HEK293 (cell line): ENCODE measurements at regions of chr11 and their contacts with region 1.

Region 1: DNA sequence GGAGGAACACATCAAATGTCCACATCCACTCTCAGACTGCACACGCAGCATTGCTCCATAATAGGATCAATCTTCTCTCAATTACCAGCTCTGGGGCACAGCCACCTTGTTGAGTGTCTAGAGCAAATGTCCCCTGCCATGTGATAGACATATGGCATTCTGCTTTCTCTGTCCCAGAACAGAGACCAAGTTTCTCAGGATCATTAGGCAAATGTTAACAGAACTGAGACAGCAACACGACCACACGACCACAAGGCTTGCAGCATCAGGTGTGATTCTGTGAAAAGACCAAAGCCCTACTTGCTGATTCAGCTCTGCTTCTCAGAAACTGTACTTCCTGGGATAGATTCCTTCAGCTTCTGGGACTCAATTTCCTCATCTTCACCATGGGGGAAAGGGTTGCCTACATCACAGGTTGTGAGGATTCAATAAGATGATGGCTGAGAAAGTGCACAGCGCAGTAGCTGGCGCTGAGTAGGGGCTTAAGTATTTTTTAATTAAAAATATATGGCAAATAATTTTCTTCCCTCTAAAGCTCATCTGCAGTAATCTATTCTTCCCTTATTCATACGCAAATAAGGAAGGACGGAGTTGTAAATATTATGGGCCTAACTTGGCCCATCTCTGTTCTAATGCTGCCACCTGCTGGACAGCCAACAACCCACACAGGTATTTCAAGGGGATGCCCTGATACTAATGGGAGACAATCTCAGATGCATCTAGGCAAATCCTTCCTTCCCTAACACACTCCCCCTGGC is 54.3 kb upstream of the USP47 start:
- H3K4me3 ChIP-seq: no peak overlapping the region
- H3K27ac ChIP-seq: no peak overlapping the region
- H3K4me1 ChIP-seq: no peaks in the 10 kb centered on the region
- CTCF ChIP-seq: peak; percentile 55

Region 2: DNA sequence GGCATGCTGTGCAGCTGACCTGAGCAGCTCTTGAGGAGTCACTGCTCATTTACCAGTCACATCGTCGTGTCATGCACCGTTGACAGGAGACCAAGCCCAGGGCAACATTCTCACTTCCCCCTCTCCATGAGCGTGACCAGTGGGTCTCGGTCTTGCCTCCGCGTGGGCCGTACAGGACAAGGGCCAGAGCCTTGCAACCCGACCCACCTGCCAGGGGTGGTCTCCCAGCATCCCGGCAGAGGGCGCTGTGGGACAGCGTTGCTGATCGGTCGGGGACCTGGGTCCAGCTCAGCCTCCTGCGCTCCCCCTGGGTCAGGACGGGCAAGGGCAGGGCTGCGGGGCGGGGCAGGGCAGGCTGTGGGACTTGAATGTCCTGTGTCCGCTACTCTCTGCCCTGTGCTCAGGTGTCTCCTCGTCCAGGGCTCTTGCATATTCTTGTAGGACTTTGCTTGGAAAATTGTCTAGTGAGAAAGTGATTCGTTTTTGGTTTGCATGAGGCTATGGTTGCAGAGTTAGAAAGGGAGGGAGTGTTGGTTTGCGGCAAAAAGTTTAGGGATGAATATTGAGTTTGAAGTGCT is 995.0 kb before region 1 on chr11:
- CTCF ChIA-PET with region 1: interaction called, 12 read pairs
- POLR2A ChIA-PET with region 1: no interaction called
- H3K4me3 ChIP-seq: no peak overlapping the region
- H3K27ac ChIP-seq: no peak overlapping the region
- H3K4me1 ChIP-seq: no peaks in the 10 kb centered on the region
- CTCF ChIP-seq: peak; percentile 90

Region 3: DNA sequence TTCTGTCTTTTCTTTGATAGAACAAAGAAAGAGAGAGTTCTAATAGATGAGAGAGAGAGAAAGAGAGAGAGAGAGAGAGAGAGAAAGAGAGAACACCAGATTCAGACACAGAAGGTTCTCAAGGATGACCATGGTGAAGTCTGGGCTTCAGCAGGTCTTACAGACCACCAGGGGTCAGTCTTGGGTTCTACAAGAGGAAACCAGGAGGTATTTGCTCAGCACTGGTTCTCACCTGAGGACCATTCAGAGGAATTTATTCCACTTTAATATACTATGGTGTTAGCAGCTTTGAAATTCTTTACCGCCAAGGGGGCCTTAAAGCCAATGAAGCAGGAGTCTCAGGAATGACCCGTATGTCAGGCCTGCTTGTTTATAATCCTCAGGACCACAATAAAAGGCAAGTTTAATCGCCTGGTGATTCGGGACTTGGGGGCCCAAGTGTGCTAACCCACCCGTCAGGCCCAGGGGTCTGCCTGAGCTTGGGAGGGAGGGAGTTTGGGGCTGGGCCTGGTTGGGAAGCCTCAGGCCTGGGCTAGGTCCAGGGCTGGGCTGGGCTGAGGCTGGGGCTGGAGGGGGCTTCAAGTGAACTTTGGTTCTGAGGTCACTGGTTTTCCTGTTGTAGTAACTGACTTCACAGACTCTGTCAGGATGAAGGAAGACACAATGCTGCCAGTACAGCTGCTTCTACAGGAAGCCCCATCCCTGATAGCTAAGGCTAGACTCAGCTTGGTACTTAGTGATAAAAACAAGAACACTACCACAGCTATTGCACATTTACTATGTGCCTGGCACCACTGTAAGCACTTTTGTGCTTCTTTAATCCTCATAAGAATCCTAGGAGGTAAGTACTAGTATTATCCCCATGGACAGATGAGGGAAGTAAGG is 750.4 kb before region 1 on chr11:
- CTCF ChIA-PET with region 1: interaction called, 55 read pairs
- POLR2A ChIA-PET with region 1: no interaction called
- H3K4me3 ChIP-seq: no peak overlapping the region
- H3K27ac ChIP-seq: no peak overlapping the region
- H3K4me1 ChIP-seq: no peaks in the 10 kb centered on the region
- CTCF ChIP-seq: no peak

Region 4: GRCh38 chr11:11230802-11231562 is 556.5 kb before region 1 on chr11:
- CTCF ChIA-PET with region 1: interaction called, 10 read pairs
- POLR2A ChIA-PET with region 1: no interaction called
- H3K4me3 ChIP-seq: no peak overlapping the region
- H3K27ac ChIP-seq: no peak overlapping the region
- H3K4me1 ChIP-seq: no peaks in the 10 kb centered on the region
- CTCF ChIP-seq: no peak

Region 5: GRCh38 chr11:11621573-11622319 is 165.7 kb before region 1 on chr11 and contains the start of gene GALNT18:
- CTCF ChIA-PET with region 1: interaction called, 12 read pairs
- POLR2A ChIA-PET with region 1: no interaction called
- H3K4me3 ChIP-seq: peak within 1 kb of the TSS; percentile 48
- H3K27ac ChIP-seq: peak within 1 kb of the TSS; percentile 10; the same call in 1 of the 2 replicates
- H3K4me1 ChIP-seq: no peaks in the 10 kb centered on the region
- CTCF ChIP-seq: peak; percentile 84

Region 6: DNA sequence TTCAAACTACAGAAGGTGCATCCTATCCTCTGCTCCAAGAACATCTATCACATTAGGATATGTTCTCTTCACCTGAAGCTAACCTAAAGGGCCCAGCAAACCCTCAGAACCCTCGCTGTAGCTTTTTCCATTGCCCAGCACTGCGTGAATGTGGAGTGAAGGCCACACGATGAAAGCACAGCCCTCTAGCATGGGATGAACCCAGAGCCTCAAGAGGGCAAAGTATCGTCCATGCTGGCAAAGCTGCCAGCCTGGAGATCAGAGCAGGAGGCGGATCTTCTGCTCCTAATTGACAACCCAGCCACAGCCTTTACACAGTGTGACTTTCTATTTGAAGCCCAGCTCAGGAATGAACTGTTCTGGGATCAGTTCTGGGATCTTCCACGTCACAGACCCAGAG is 10.8 kb before region 1 on chr11:
- CTCF ChIA-PET with region 1: interaction called, 24 read pairs
- POLR2A ChIA-PET with region 1: no interaction called
- H3K4me3 ChIP-seq: no peak overlapping the region
- H3K27ac ChIP-seq: no peak overlapping the region
- H3K4me1 ChIP-seq: no peaks in the 10 kb centered on the region
- CTCF ChIP-seq: no peak

Region 7: DNA sequence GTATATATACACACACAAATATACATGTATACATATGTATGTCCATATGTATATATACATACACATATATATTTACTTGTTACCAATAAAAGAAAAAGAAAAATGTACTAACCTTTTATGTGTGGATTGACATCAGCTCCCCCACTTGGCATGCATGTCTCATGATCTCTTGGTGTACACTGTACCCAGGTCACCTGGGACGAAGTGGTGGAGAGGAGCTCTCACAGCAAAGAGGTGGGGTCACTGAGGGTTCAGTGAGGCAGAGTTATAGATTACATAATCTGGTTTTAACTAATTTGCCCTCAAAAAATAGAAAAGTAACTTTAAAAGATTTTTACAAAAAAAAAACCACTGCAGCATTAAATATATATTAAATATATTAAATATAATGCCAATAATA is 38.8 kb after region 1 on chr11:
- CTCF ChIA-PET with region 1: no interaction called
- POLR2A ChIA-PET with region 1: no interaction called
- H3K4me3 ChIP-seq: no peak overlapping the region
- H3K27ac ChIP-seq: no peak overlapping the region
- H3K4me1 ChIP-seq: no peaks in the 10 kb centered on the region
- CTCF ChIP-seq: no peak